PC-3 (cell line): ENCODE measurements at regions of chr6 and their contacts with region 1.

Region 1: GRCh38 chr6:139375232-139376016 is 976 bp upstream of the CITED2 start:
- DNase-seq: peak; percentile 90
- ATAC-seq: peak; percentile 70
- H3K4me3 ChIP-seq: peak overlapping the region; percentile 91
- H3K27ac ChIP-seq: peak overlapping the region; percentile 83
- H3K4me1 ChIP-seq: peaks cover 35% of the 10 kb centered on the region
- H3K27me3 ChIP-seq: no peaks in the 10 kb centered on the region
- CTCF ChIP-seq: no peak

Region 2: GRCh38 chr6:139568956-139569548 is 193.6 kb after region 1 on chr6:
- CTCF ChIA-PET with region 1: no interaction called
- POLR2A ChIA-PET with region 1: no interaction called
- intact Hi-C with region 1: loop called (anchors 10 kb)
- DNase-seq: peak; percentile 67
- ATAC-seq: peak; percentile 87
- H3K4me3 ChIP-seq: no peak overlapping the region
- H3K27ac ChIP-seq: peak overlapping the region; percentile 63
- H3K4me1 ChIP-seq: peaks cover 26% of the 10 kb centered on the region
- H3K27me3 ChIP-seq: no peaks in the 10 kb centered on the region
- CTCF ChIP-seq: no peak

Region 3: GRCh38 chr6:139732451-139732850 is 357.0 kb after region 1 on chr6:
- CTCF ChIA-PET with region 1: no interaction called
- POLR2A ChIA-PET with region 1: no interaction called
- intact Hi-C with region 1: loop called (anchors 5 kb)
- DNase-seq: peak; percentile 67
- ATAC-seq: peak; percentile 93
- H3K4me3 ChIP-seq: no peak overlapping the region
- H3K27ac ChIP-seq: no peak overlapping the region
- H3K4me1 ChIP-seq: peaks cover 5% of the 10 kb centered on the region
- H3K27me3 ChIP-seq: no peaks in the 10 kb centered on the region
- CTCF ChIP-seq: no peak

Region 4: GRCh38 chr6:139895205-139895793 is 519.9 kb after region 1 on chr6:
- CTCF ChIA-PET with region 1: no interaction called
- POLR2A ChIA-PET with region 1: no interaction called
- intact Hi-C with region 1: loop called (anchors 1 kb)
- DNase-seq: peak; percentile 15
- ATAC-seq: no peak
- H3K4me3 ChIP-seq: no peak overlapping the region
- H3K27ac ChIP-seq: no peak overlapping the region
- H3K4me1 ChIP-seq: no peaks in the 10 kb centered on the region
- H3K27me3 ChIP-seq: no peaks in the 10 kb centered on the region
- CTCF ChIP-seq: peak; percentile 43

Region 5: GRCh38 chr6:140174515-140174914 is 799.1 kb after region 1 on chr6:
- CTCF ChIA-PET with region 1: no interaction called
- POLR2A ChIA-PET with region 1: no interaction called
- intact Hi-C with region 1: loop called (anchors 10 kb)
- DNase-seq: peak; percentile 97
- ATAC-seq: peak; percentile 93
- H3K4me3 ChIP-seq: peak overlapping the region; percentile 46; the same call in 1 of the 2 replicates
- H3K27ac ChIP-seq: peak overlapping the region; percentile 80
- H3K4me1 ChIP-seq: peaks cover 24% of the 10 kb centered on the region
- H3K27me3 ChIP-seq: no peaks in the 10 kb centered on the region
- CTCF ChIP-seq: no peak

Region 6: GRCh38 chr6:140846503-140847261 is 1471.3 kb after region 1 on chr6:
- CTCF ChIA-PET with region 1: no interaction called
- POLR2A ChIA-PET with region 1: no interaction called
- intact Hi-C with region 1: loop called (anchors 10 kb)
- DNase-seq: peak; percentile 78
- ATAC-seq: peak; percentile 65
- H3K4me3 ChIP-seq: peak overlapping the region; percentile 29; the same call in 1 of the 2 replicates
- H3K27ac ChIP-seq: peak overlapping the region; percentile 62
- H3K4me1 ChIP-seq: peaks cover 33% of the 10 kb centered on the region
- H3K27me3 ChIP-seq: no peaks in the 10 kb centered on the region
- CTCF ChIP-seq: no peak